Activated CD8-positive, alpha-beta memory T cell treated with anti-CD3 and anti-CD28 coated beads, Interleukin-2, amount 10 ng/mL, durations not matched to agents 7 days and 5 days (primary cell): ENCODE measurements at regions of chr10 and their contacts with region 1.

Region 1: DNA sequence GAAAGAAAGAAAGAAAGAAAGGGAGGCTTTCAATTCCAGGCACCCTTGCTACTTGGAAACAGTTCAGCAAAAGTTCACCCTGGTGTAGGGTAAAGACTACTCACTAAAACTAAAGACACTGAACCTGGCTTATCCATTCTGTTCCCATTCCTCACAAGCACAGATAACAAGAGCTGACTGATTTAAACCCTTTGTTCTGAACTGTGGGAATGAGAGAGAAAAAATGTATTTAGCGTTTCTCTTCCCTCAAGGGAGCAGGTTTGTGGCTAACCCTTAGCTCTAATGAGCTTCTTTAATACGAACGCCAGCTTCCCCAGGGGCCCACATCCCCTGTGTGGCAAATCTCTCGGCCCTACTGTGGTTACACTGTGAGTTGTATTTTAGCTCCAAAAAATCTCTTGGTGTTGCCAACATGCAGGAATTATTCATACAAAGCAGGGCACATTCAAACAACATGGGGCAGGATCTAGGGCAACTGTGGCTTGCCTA is 23.3 kb downstream of the PRTFDC1 start:
- DNase-seq: no peak
- ATAC-seq: no peak
- H3K4me3 Mint-ChIP-seq: no peak overlapping the region
- H3K27ac Mint-ChIP-seq: no peak overlapping the region
- H3K4me1 Mint-ChIP-seq: peaks cover 13% of the 10 kb centered on the region
- H3K27me3 Mint-ChIP-seq: no peaks in the 10 kb centered on the region

Region 2: GRCh38 chr10:24952707-24953645 is 23.9 kb after region 1 on chr10:
- CTCF ChIA-PET with region 1: interaction called, 11 read pairs
- DNase-seq: peak; percentile 55
- ATAC-seq: peak; percentile 78
- H3K4me3 Mint-ChIP-seq: peak overlapping the region; percentile 72
- H3K27ac Mint-ChIP-seq: peak overlapping the region; percentile 83
- H3K4me1 Mint-ChIP-seq: peaks cover 35% of the 10 kb centered on the region
- H3K27me3 Mint-ChIP-seq: no peaks in the 10 kb centered on the region

Region 3: DNA sequence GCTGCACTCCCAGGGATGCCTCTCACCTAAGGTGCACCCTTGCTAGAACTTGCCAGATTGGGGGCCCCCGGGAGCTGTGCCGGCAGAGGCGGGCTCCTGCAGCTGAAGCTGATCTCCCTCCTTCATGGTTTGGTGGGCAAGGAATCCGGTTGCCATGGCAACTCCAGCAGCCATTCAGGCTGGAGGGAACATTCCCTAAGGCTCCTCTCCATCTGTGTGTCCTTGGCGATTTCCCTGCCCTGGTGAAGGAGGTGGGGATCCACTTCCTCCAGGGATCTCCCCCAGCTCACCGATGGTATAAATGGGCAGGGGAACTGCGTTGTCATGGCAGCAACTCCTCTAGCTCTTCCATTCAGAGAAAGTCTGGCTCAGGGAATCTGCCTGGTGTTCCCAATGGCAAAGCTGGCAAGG is 196.1 kb after region 1 on chr10:
- CTCF ChIA-PET with region 1: no interaction called
- DNase-seq: no peak
- ATAC-seq: no peak
- H3K4me3 Mint-ChIP-seq: no peak overlapping the region
- H3K27ac Mint-ChIP-seq: no peak overlapping the region
- H3K4me1 Mint-ChIP-seq: no peaks in the 10 kb centered on the region
- H3K27me3 Mint-ChIP-seq: no peaks in the 10 kb centered on the region